Posterior cingulate gyrus (tissue), 11 donors: ENCODE measurements at regions of chr11 and their contacts with region 1.

Region 1: DNA sequence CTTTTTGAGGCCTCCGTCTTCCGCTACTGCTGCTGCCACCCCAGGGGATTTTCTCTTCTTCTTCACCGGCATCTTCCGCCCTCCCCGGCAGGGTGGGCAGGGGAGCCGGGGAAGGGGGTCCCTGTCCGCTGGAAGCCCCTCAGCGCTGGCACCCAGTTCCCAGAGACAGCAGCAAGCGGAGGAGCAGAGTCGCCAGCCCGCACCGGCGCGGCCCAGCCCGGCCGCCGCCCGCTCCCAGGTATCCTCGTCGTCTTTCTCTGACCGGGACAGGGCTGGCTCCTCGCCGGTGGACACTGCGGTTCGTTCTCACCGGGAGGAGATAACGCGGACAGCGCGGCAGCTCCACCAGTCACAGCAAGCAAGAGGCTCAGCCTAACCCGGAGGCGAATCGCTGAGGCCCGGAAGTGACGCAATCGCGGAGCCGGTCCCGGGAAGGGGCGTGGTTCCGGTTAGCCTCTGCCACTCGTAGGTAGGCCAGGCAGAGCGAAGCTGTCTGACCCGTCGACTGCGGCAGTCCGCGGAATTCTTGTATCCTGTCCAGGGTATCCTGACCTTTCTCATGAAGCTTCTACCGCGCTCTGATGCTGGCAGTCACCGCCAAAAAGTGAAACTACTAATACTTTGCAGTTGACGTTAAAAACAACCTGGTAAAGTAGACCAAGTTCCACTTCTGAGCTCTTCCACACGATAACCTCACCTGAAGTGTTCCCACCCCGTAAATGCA is at the start of gene DCUN1D5:
- DNase-seq: peak; percentile 97 to 100 (median 99)

Region 2: GRCh38 chr11:103108933-103109817 is 17.2 kb after region 1 on chr11 and contains the start of gene DYNC2H1:
- intact Hi-C with region 1: loop called (anchors 1 kb)
- DNase-seq: peak; percentile 71 to 98 (median 86)